ENCODE measurements at regions of chr20 and their contacts with region 1.

Region 1: GRCh38 chr20:62302341-62303058 is at the start of gene ADRM1:
- DNase-seq: peak; percentile 99
- ATAC-seq: peak; percentile 86
- H3K4me3 Mint-ChIP-seq: peak within 1 kb of the TSS; percentile 92
- H3K27ac Mint-ChIP-seq: peak within 1 kb of the TSS; percentile 96
- H3K4me1 Mint-ChIP-seq: peaks cover 30% of the 10 kb centered on the region
- H3K27me3 Mint-ChIP-seq: no peaks in the 10 kb centered on the region
- CTCF ChIP-seq: peak; percentile 32
- total RNA-seq, gene ADRM1: 97.9 and 98.0 TPM in 2 replicates

Region 2: DNA sequence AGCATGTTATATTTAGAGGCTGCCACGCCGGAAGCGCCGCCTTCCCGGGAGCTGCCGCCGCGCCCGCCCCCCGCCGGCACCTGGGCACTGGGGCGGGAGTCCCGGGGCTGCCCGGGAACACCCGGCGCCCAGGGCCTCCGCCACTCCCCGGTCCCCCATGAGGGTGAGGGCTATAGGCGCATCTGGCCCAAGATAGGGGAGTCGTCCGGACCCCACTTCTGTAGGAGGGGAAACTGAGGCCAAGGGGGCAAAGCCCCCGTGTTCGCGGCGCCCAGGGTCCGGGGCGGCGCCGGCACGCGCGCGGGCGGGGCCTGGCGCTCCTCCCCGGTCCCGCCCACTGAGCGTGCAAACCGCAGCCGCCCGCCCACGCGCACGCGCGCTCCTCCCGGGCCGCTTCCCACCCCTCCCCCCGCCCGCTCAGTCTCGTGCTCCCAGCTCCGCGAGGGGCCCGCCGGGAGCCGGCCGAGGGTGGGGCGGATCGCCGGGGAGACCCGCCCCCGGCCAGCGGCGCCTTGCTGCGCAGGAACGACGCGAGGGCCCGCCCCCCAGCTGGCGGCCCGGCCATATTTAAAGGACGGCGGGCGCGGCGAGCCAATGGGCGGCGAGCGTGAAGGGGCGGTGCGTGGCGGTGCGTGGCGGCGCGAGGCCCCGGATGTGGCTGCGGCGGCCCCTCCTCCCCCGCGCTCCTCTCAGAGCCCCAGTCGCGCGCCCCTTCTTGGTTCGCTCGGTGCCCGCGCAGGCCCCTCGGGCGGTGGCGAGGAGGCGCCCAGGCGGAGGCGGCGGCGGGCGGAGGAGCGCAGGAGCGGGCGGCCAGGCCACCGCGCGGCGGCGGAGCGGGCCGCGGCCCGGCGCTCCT is 180.5 kb before region 1 on chr20 and contains the start of gene LSM14B:
- CTCF ChIA-PET with region 1: no interaction called
- POLR2A ChIA-PET with region 1: no interaction called
- intact Hi-C with region 1: loop called (anchors 2 kb)
- DNase-seq: peak; percentile 95
- ATAC-seq: peak; percentile 87
- H3K4me3 Mint-ChIP-seq: peak within 1 kb of the TSS; percentile 88
- H3K27ac Mint-ChIP-seq: peak within 1 kb of the TSS; percentile 89
- H3K4me1 Mint-ChIP-seq: peaks cover 19% of the 10 kb centered on the region
- H3K27me3 Mint-ChIP-seq: no peaks in the 10 kb centered on the region
- CTCF ChIP-seq: no peak
- total RNA-seq, gene LSM14B: 35.4 and 36.4 TPM in 2 replicates

Region 3: GRCh38 chr20:62368976-62369814 is 66.7 kb after region 1 on chr20:
- CTCF ChIA-PET with region 1: interaction called, 11 read pairs
- POLR2A ChIA-PET with region 1: interaction called, 7 read pairs
- intact Hi-C with region 1: loop called (anchors 1 kb)
- DNase-seq: no peak
- ATAC-seq: no peak
- H3K4me3 Mint-ChIP-seq: no peak overlapping the region
- H3K27ac Mint-ChIP-seq: no peak overlapping the region
- H3K4me1 Mint-ChIP-seq: peaks cover 16% of the 10 kb centered on the region
- H3K27me3 Mint-ChIP-seq: peaks cover 2% of the 10 kb centered on the region
- CTCF ChIP-seq: no peak

Region 4: DNA sequence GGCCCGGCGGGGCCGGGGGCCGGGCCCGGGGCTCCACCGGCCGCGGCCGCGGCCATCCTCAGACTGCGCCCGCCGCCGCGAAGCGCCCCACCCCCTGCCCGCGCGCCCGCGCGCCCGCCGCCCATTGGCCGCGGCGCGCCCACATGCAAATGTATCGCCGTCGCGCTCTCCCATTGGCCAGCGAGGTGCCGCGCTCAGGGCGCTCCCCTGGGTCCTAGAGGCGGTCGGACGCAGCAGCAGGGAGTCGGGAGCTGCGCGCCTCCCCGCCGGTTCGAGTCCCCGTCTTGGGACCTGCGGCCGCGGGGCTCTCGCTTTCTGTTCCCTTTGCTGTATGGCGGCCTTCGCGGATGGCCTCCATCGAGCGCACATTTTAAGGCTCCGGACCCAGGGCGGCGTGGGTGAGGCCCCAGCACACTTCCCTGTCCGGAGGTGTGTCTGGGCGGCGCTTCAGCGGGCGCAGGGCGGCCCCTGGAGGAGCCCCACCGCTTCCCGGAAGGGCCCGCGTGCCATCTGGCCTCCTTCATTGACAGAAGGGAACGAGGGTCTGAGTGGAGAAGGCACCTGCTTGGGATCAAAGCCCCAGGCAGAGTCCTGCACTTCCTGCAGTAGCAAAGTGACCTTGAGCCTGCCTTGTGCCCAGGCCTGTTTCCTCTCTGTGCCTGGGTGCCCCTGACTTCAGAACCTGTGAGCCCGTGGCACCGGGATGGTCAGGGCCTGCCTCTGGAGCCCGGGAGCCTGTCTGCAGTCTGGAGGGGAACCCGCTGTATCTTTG is 104.9 kb after region 1 on chr20 and contains the start of gene CABLES2:
- CTCF ChIA-PET with region 1: no interaction called
- POLR2A ChIA-PET with region 1: no interaction called
- intact Hi-C with region 1: loop called (anchors 1 kb)
- DNase-seq: peak; percentile 90
- ATAC-seq: peak; percentile 90
- H3K4me3 Mint-ChIP-seq: peak within 1 kb of the TSS; percentile 88
- H3K27ac Mint-ChIP-seq: peak within 1 kb of the TSS; percentile 86
- H3K4me1 Mint-ChIP-seq: peaks cover 36% of the 10 kb centered on the region
- H3K27me3 Mint-ChIP-seq: no peaks in the 10 kb centered on the region
- CTCF ChIP-seq: no peak
- total RNA-seq, gene CABLES2: 6.6 and 7.0 TPM in 2 replicates

Region 5: GRCh38 chr20:62740286-62741141 is 438.0 kb after region 1 on chr20:
- CTCF ChIA-PET with region 1: no interaction called
- POLR2A ChIA-PET with region 1: no interaction called
- intact Hi-C with region 1: loop called (anchors 1 kb)
- DNase-seq: peak; percentile 55
- ATAC-seq: peak; percentile 85
- H3K4me3 Mint-ChIP-seq: peak overlapping the region; percentile 80
- H3K27ac Mint-ChIP-seq: peak overlapping the region; percentile 86
- H3K4me1 Mint-ChIP-seq: peaks cover 35% of the 10 kb centered on the region
- H3K27me3 Mint-ChIP-seq: no peaks in the 10 kb centered on the region
- CTCF ChIP-seq: no peak

Region 6: GRCh38 chr20:62926239-62927104 is 624.0 kb after region 1 on chr20 and contains the start of gene DIDO1:
- CTCF ChIA-PET with region 1: no interaction called
- POLR2A ChIA-PET with region 1: no interaction called
- intact Hi-C with region 1: loop called (anchors 2 kb)
- DNase-seq: peak; percentile 90
- ATAC-seq: peak; percentile 87
- H3K4me3 Mint-ChIP-seq: peak within 1 kb of the TSS; percentile 97
- H3K27ac Mint-ChIP-seq: peak within 1 kb of the TSS; percentile 93
- H3K4me1 Mint-ChIP-seq: peaks cover 81% of the 10 kb centered on the region
- H3K27me3 Mint-ChIP-seq: no peaks in the 10 kb centered on the region
- CTCF ChIP-seq: no peak
- total RNA-seq, gene DIDO1: 79.2 and 89.1 TPM in 2 replicates